CD4-positive, alpha-beta memory T cell (primary cell): ENCODE measurements at regions of chr1 and their contacts with region 1.

Region 1: GRCh38 chr1:243799908-243800307 is 50.1 kb downstream of the AKT3 start:
- DNase-seq: no peak
- H3K4me3 ChIP-seq: no peak overlapping the region
- H3K4me3 Mint-ChIP-seq: peak overlapping the region in 1 of 8 donors; percentile 17
- H3K27ac ChIP-seq: no peak overlapping the region
- H3K27ac Mint-ChIP-seq: peak overlapping the region in 2 of 7 donors; percentile 9 to 12
- H3K4me1 ChIP-seq: peaks cover 21% of the 10 kb centered on the region
- H3K4me1 Mint-ChIP-seq: peaks cover 41 to 58% (median 48%) of the 10 kb centered on the region in 4 donors
- H3K27me3 ChIP-seq: no peaks in the 10 kb centered on the region
- H3K27me3 Mint-ChIP-seq: no peaks in the 10 kb centered on the region

Region 2: DNA sequence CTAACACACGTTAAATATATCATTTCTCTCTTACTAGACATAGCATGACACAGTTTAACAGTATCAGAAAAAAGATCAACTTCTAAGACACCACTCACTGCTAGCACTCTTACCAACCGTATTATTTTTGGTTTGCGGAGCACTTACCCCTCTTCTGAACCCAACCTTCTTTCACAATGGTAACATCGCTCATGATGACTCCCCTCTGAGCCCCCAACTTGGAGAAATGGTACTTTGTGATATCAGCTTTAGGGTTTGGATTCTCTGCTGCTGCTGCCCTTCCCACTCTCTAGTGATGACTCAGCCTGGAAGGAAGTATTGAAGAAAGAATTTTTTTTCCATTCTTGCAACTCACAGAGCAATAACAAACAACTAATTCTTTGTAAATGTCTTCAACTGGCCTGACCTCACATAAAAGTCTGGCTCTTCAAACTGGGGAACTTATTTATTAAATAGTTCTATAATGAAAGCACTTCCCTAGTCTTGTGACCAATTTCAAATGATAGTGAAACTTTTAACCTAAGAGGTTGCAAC is 43.1 kb after region 1 on chr1:
- CTCF ChIA-PET with region 1: no interaction called
- POLR2A ChIA-PET with region 1: no interaction called
- intact Hi-C with region 1: loop called (anchors 5 kb)
- DNase-seq: peak in 2 of 5 donors; percentile 20 to 61
- H3K4me3 ChIP-seq: no peak overlapping the region
- H3K4me3 Mint-ChIP-seq: peak overlapping the region; percentile 56 to 85 (median 74)
- H3K27ac ChIP-seq: peak overlapping the region; percentile 26
- H3K27ac Mint-ChIP-seq: peak overlapping the region; percentile 67 to 97 (median 87)
- H3K4me1 ChIP-seq: peaks cover 74% of the 10 kb centered on the region
- H3K4me1 Mint-ChIP-seq: peaks cover 38 to 71% (median 61%) of the 10 kb centered on the region in 4 donors
- H3K27me3 ChIP-seq: no peaks in the 10 kb centered on the region
- H3K27me3 Mint-ChIP-seq: no peaks in the 10 kb centered on the region

Region 3: DNA sequence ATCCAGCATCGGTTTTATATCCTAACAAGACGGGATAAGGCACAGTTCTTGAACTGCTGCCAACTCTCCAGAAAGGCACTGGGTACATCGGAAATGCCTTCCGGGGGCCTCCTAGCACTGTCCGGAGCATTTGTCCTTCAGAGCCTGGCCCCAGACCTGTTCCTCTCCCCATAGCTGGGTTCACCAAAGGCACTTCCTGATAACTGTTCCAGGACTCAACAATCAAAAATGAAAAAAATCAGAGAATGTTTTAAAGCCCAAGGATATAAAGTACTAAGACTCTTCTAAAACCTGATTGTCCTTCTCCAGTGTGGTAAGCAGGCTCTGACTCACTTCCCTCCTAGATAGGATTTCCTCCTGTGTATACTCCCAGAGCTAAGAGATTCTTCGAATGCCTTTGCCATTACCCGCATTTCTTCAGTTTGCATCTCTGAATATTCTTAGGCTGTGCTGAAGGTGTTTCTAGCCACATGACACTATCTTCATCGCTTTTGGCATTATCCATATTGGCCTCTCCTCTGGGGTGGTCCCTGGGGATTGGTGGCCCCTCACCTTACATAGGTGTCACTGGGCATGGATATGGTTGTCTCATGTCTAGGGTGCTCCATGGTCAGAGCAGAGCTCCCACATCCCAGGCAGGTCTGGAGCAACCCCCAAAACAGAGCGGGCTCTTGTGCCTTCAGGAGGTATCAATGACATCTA is 364.1 kb after region 1 on chr1:
- CTCF ChIA-PET with region 1: no interaction called
- POLR2A ChIA-PET with region 1: no interaction called
- intact Hi-C with region 1: no loop called
- DNase-seq: no peak
- H3K4me3 ChIP-seq: no peak overlapping the region
- H3K4me3 Mint-ChIP-seq: no peak overlapping the region
- H3K27ac ChIP-seq: no peak overlapping the region
- H3K27ac Mint-ChIP-seq: no peak overlapping the region
- H3K4me1 ChIP-seq: no peaks in the 10 kb centered on the region
- H3K4me1 Mint-ChIP-seq: no peaks in the 10 kb centered on the region
- H3K27me3 ChIP-seq: no peaks in the 10 kb centered on the region
- H3K27me3 Mint-ChIP-seq: no peaks in the 10 kb centered on the region